Aorta (tissue), 5 donors: ENCODE measurements at regions of chr5 and their contacts with region 1.

Region 1: GRCh38 chr5:849651-850301 is 1.0 kb downstream of the ZDHHC11 start:
- DNase-seq: peak; percentile 33 to 73
- ATAC-seq: peak; percentile 40
- H3K4me3 ChIP-seq: no peak overlapping the region
- H3K27ac ChIP-seq: no peak overlapping the region
- H3K4me1 ChIP-seq: no peaks in the 10 kb centered on the region
- H3K27me3 ChIP-seq: no peaks in the 10 kb centered on the region

Region 2: GRCh38 chr5:321230-321725 is 528.5 kb before region 1 on chr5 and contains the start of gene AHRR:
- intact Hi-C with region 1: no loop called
- DNase-seq: peak; percentile 65 to 87
- ATAC-seq: peak; percentile 51
- H3K4me3 ChIP-seq: peak within 1 kb of the TSS; percentile 23 to 34
- H3K27ac ChIP-seq: no peak within 1 kb of the TSS
- H3K4me1 ChIP-seq: no peaks in the 10 kb centered on the region
- H3K27me3 ChIP-seq: no peaks in the 10 kb centered on the region
- total RNA-seq, gene AHRR: 1.9 to 3.8 TPM

Region 3: DNA sequence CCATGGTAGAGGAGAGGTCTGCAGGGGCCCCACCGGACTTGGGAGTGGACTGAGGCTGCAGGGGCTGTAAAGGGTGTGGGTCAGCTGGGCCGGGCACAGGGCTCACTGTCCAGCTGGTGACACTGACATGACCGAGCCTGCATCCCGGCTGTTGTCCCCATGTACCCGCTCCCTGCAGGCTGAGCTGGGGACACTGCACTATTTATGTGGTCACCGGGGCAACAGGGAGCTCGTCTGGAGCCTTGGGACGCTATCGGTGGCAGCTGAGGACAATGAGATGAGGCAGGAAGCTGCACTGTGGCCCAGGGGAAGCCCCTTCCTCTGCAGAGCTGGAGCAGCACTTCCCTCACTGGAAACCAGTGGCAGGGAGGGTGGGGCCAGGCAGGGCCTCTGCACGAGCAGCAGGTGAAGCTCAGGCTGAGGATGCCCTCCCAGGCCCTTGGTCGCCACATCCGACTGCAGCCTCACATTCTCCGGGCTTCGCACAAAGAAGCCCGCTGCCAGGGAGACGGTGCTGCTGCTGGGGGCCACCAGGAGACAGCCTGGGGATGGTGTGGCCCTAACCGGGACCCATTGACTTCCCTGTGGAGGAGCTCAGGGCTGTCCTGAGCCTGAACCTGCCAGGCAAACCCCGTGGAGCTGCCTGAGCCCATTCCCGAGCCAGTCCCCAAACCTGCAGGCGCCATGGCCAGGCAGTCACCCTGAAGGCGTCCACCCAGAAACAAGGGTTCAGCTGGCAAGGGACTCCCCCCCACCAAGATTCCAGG is 91.7 kb before region 1 on chr5:
- intact Hi-C with region 1: loop called (anchors 2 kb)
- DNase-seq: peak; percentile 60 to 86
- ATAC-seq: no peak
- H3K4me3 ChIP-seq: no peak overlapping the region
- H3K27ac ChIP-seq: no peak overlapping the region
- H3K4me1 ChIP-seq: no peaks in the 10 kb centered on the region
- H3K27me3 ChIP-seq: no peaks in the 10 kb centered on the region